ENCODE measurements at regions of chr20 and their contacts with region 1.

Region 1: DNA sequence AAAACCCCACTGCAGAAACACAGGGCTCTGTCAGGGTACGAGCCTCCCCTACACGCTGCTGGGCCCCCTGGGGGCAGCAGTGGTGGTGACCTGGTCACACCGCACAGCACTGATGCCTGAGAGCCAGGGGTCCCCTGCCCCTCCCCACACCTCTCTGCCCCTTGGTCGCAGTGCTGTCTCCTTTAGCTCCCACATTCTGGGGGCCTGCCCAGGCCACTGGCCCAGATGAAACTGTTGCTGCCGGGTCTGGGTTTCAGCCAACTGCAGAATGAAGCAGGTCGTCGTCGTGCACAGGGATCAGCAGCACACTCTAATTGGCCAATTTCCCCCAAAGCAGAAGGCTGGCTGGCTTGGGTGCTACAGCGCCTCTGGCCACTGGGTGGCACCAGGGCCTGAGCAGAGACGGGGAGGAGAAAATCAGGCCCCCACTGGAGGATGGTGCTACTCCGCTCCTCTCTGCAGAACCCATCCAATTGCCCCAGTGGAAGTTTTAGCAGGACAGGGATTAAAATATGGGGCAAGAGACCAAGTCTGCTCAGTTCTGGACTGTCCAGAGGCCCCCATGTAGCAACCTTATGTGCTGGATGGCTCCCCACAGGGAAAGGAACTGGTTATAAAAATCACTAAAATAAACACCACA is 26.1 kb downstream of the DIDO1 start:
- DNase-seq: peak; percentile 67
- H3K4me3 Mint-ChIP-seq: no peak overlapping the region
- H3K27ac Mint-ChIP-seq: no peak overlapping the region
- H3K4me1 Mint-ChIP-seq: no peaks in the 10 kb centered on the region
- H3K27me3 Mint-ChIP-seq: no peaks in the 10 kb centered on the region
- CTCF ChIP-seq: peak; percentile 75

Region 2: DNA sequence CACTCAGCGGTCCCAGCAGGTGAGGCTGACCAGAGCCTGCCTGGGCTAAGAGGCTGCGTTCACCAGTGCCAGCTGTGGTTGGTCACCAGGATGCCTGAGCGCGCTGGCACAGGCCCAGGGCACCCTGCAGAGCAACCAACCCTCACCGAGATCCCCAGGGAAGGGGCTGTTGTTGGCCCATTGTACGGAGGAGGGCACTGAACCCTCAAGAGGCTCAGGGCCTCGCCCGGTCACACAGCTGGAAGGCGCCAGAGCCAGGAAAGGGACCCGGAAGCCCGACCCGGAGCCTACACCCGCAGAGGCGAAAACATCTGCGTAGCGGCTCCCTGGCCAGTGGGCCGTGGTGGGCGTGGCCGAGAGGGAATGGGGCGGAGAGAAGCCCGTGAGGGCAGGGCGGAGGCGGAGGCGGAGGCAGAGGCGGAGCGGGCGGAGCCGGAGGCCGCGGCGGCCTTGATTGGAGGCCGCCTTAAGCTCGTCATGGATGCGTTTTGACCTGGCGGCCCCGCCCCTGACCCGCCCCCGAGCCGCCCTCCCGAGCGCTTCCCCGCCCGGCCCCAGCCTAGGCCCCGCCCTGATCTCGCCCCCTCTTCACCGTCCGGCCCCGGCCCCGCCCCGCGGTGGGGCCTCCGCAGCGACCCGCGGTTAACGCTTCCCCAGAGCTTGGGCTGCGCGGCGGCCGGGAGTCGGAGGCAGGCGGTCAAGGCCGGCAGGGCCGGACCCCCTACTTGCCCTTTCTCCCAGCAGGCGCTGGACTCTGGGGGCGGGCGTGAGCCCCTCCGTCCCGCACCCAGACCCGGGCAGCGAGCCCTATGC is 106.1 kb before region 1 on chr20:
- CTCF ChIA-PET with region 1: no interaction called
- POLR2A ChIA-PET with region 1: no interaction called
- intact Hi-C with region 1: no loop called
- DNase-seq: peak; percentile 94
- H3K4me3 Mint-ChIP-seq: peak overlapping the region; percentile 76
- H3K27ac Mint-ChIP-seq: peak overlapping the region; percentile 87
- H3K4me1 Mint-ChIP-seq: peaks cover 17% of the 10 kb centered on the region
- H3K27me3 Mint-ChIP-seq: no peaks in the 10 kb centered on the region
- CTCF ChIP-seq: no peak

Region 3: DNA sequence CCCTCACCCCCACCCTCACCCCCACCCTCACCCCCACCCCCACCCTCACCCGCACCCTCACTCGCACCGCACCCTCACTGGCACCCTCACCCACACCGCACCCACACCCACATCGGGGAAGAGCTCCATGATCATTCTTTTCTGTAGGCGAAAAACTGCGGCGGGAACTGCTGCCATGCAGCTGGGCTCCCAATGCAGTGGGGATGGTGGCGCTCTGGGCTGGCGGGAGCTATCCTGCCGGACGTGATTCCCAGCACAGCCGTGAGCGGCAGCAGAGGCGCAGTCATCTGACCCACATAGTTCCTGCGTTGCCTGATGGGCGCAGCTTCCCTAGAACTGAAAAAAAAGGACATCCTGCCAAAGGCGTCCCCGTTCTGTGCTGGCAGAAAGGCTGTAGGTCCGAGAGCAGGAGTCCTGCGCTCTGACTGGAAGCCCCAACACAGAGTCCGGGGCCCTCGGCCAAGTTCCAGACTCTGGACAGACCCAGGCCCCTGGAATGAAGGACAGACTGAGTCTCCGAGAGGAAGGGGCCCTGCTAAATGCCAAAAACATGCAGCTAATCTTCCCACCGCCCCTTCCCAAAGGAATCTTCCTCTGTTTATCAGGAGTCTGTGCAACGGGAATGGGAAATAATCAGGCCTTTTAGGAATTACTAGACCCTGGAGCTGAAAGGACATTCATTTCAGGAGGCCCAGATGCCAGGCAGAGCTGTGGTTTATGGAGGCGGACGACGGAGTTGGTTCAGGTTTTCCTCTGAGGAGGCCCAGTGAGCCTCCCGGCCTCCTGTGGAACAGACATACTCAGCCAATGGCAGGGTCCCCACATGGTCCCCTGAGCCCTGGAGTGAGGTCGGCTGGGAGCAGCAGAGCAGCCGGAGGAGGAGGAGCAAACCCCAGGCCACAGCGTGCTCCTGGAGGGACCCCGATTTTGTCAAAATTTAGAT is 24.5 kb before region 1 on chr20:
- CTCF ChIA-PET with region 1: interaction called, 21 read pairs
- POLR2A ChIA-PET with region 1: interaction called, 3 read pairs
- intact Hi-C with region 1: no loop called
- DNase-seq: peak; percentile 82
- H3K4me3 Mint-ChIP-seq: peak overlapping the region; percentile 40
- H3K27ac Mint-ChIP-seq: peak overlapping the region; percentile 16
- H3K4me1 Mint-ChIP-seq: peaks cover 6% of the 10 kb centered on the region
- H3K27me3 Mint-ChIP-seq: no peaks in the 10 kb centered on the region
- CTCF ChIP-seq: peak; percentile 27

Region 4: DNA sequence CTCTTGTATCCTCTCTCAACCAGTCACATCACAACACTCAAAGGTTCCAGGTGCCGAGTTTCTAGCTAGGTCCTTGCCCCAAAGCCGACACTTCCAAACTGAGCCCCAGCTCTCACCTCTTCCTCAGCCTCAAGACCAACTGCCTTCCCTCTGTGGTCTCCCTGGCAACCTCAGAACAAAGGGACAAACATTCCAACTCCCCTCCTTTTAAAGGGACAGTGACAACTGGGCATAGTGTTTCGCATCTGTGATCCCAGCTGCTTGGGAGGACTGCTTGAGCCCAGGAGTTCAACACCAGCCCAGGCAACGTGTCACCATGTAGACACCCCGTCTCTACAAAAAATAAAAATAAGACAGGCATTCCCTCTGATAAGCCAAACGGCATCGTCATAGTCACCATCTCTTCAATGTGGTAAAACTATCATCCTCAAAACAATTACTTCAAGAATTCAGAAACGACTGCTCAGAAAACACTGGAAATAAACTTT is 14.8 kb after region 1 on chr20:
- CTCF ChIA-PET with region 1: interaction called, 54 read pairs
- POLR2A ChIA-PET with region 1: interaction called, 29 read pairs
- intact Hi-C with region 1: no loop called
- DNase-seq: no peak
- H3K4me3 Mint-ChIP-seq: no peak overlapping the region
- H3K27ac Mint-ChIP-seq: peak overlapping the region; percentile 84
- H3K4me1 Mint-ChIP-seq: peaks cover 31% of the 10 kb centered on the region
- H3K27me3 Mint-ChIP-seq: no peaks in the 10 kb centered on the region
- CTCF ChIP-seq: no peak

Region 5: GRCh38 chr20:62926239-62927104 is 26.3 kb after region 1 on chr20 and contains the start of gene DIDO1:
- CTCF ChIA-PET with region 1: interaction called, 27 read pairs
- POLR2A ChIA-PET with region 1: interaction called, 36 read pairs
- intact Hi-C with region 1: no loop called
- DNase-seq: peak; percentile 82
- H3K4me3 Mint-ChIP-seq: peak within 1 kb of the TSS; percentile 76
- H3K27ac Mint-ChIP-seq: peak within 1 kb of the TSS; percentile 95
- H3K4me1 Mint-ChIP-seq: peaks cover 31% of the 10 kb centered on the region
- H3K27me3 Mint-ChIP-seq: no peaks in the 10 kb centered on the region
- CTCF ChIP-seq: peak; percentile 65
- total RNA-seq, gene DIDO1: 36.8 and 40.7 TPM in 2 replicates

Region 6: DNA sequence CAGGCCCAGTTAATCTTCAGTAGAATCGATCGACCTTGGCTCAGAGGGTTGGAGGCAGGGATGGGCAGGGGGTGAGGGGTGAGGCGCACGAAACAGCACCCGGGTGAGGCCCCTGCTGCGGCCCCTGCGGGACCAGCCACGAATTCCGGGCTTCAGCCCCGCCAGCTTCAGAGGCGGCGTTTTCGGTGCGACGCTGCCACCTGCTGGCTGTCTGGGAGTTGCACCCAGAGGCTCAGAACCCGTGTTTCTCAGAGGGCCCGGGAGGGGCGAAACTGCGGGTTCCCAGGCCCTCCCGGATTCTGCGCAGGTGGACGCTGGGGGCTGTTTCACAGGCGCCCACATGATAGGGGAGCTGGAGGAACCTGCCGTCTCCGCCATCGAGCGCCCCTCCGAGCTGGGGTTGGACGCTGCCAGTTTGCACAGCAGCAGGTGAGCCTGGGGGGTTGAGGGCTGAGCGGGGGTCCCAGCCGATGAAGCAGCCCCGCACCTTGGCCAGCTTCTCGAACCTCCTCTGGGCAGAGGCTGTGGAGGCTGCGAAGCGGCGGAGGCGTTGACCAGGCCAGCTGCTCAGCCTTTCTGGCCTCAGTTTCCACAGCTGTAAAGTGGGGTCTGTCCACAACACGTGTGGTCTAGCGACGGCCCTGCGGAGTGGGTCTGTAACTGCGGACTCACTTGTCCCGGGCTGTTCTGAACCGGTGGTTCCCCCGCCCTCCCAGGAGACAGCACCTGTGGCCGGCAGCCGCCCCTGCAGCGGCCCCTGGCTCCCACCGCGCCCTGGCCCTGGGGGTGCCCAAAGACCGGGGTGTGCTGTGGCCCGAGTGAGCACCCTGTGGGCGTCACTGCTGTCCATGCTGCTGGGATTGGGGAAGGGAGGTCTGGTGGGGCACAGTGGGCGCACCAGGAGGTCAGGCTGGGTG is 109.1 kb after region 1 on chr20:
- CTCF ChIA-PET with region 1: interaction called, 14 read pairs
- POLR2A ChIA-PET with region 1: interaction called, 5 read pairs
- intact Hi-C with region 1: loop called (anchors 1 kb)
- DNase-seq: peak; percentile 66
- H3K4me3 Mint-ChIP-seq: no peak overlapping the region
- H3K27ac Mint-ChIP-seq: no peak overlapping the region
- H3K4me1 Mint-ChIP-seq: peaks cover 6% of the 10 kb centered on the region
- H3K27me3 Mint-ChIP-seq: peaks cover 58% of the 10 kb centered on the region
- CTCF ChIP-seq: peak; percentile 89

Region 7: DNA sequence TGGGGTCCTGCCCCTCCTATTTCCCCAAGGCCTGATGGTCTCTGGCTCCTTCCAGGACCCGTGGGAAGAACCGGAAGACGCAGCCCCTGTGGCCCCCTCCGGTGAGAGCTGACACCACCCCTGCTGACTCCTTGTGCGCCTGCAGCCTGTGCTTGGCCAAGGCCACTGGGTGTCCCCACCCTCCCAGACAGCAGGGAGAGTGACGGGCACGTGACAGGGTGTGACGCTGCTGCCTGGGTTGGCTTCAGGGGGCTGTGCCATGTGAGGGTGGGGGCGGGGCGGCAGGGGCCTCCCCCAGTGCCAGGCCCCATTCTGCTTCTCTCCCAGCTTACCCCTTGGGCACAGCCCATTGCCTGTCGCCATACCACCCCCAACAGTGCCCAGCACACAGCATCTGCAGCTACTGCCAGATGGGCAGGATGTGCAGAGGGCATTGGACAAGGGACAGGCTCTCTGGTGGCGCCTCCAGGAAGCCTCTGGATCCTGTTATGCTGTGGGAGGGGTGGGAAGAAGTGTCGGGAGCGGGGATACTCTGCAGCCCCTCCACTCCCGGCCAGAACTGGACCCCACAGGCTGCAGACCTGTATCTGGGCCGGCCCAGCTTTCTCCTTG is 338.4 kb after region 1 on chr20:
- CTCF ChIA-PET with region 1: no interaction called
- POLR2A ChIA-PET with region 1: no interaction called
- intact Hi-C with region 1: no loop called
- DNase-seq: no peak
- H3K4me3 Mint-ChIP-seq: no peak overlapping the region
- H3K27ac Mint-ChIP-seq: no peak overlapping the region
- H3K4me1 Mint-ChIP-seq: no peaks in the 10 kb centered on the region
- H3K27me3 Mint-ChIP-seq: peaks cover under 1% of the 10 kb centered on the region
- CTCF ChIP-seq: no peak

Measured in MCF 10A (cell line).